H1 (cell line): ENCODE measurements at regions of chr20 and their contacts with region 1.

Region 1: GRCh38 chr20:57573890-57574289 is 13.0 kb downstream of the PCK1 start:
- DNase-seq: peak in 1 of 2 experiments; percentile 73
- H3K4me3 ChIP-seq: no peak overlapping the region
- H3K27ac ChIP-seq: no peak overlapping the region
- H3K4me1 ChIP-seq: peaks cover 0 to 10% (median 3%) of the 10 kb centered on the region in 4 experiments; a peak in 4 of 7 replicates
- H3K27me3 ChIP-seq: peaks cover 0 to 4% (median 0%) of the 10 kb centered on the region in 4 experiments; a peak in 4 of 7 replicates
- CTCF ChIP-seq: peak; percentile 73 to 89 (median 83)
- EP300 ChIP-seq: no peak
- POLR2A ChIP-seq: no peak
- RAD21 ChIP-seq: peak; percentile 41 to 61

Region 2: GRCh38 chr20:57514273-57514751 is 59.6 kb before region 1 on chr20:
- CTCF ChIA-PET with region 1: interaction called, 33 read pairs
- POLR2A ChIA-PET with region 1: no interaction called
- DNase-seq: peak in 1 of 2 experiments; percentile 71
- H3K4me3 ChIP-seq: no peak overlapping the region
- H3K27ac ChIP-seq: no peak overlapping the region
- H3K4me1 ChIP-seq: peaks cover 2 to 11% (median 3%) of the 10 kb centered on the region in 4 experiments; a peak in 5 of 7 replicates
- H3K27me3 ChIP-seq: no peaks in the 10 kb centered on the region
- CTCF ChIP-seq: peak; percentile 54 to 95 (median 80)
- EP300 ChIP-seq: no peak
- POLR2A ChIP-seq: no peak
- RAD21 ChIP-seq: peak; percentile 96 to 99

Region 3: DNA sequence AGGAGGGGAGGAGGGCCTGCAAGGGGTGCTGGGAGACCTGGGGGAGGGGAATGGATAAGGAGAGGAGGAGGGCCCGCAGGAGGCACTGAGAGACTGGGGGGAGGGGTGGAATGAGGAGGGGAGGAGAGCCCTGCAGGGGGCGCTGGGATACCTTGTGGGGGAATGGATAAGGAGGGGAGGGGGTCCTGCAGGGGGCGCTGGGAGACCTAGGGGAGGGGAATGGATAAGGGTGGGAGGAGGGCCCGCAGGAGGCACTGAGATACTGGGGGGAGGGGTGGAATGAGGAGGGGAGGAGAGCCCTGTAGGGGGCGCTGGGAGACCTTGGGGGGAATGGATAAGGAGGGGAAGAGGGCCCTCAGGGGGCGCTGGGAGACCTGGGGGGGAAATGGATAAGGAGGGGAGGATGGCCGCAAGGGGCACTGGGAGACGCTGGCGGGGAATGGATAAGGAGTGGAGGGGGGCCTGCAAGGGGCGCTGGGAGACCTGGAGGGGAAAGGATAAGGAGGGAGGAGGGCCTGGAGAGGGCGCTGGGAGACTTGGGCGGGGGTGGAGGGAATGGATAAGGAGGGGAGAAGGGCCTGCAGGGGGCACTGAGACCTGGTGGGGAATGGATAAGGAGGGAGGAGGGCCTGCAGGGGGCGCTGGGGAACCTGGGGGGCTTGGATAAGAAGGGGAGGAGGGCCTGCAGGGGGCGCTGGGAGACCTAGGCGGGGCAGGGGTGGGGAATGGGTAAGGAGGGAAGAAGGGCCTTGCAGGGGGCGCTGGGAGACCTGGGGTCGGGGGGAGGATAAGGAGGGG is 47.6 kb before region 1 on chr20:
- CTCF ChIA-PET with region 1: interaction called, 11 read pairs
- POLR2A ChIA-PET with region 1: interaction called, 4 read pairs
- DNase-seq: peak in 1 of 2 experiments; percentile 74
- H3K4me3 ChIP-seq: no peak overlapping the region
- H3K27ac ChIP-seq: no peak overlapping the region
- H3K4me1 ChIP-seq: peaks cover 0 to 19% (median 5%) of the 10 kb centered on the region in 4 experiments; a peak in 5 of 7 replicates
- H3K27me3 ChIP-seq: no peaks in the 10 kb centered on the region; a peak in 2 of 7 replicates
- CTCF ChIP-seq: peak; percentile 32 to 97 (median 59)
- EP300 ChIP-seq: no peak
- POLR2A ChIP-seq: no peak
- RAD21 ChIP-seq: peak; percentile 13 to 20; a peak in 3 of 4 replicates

Region 4: DNA sequence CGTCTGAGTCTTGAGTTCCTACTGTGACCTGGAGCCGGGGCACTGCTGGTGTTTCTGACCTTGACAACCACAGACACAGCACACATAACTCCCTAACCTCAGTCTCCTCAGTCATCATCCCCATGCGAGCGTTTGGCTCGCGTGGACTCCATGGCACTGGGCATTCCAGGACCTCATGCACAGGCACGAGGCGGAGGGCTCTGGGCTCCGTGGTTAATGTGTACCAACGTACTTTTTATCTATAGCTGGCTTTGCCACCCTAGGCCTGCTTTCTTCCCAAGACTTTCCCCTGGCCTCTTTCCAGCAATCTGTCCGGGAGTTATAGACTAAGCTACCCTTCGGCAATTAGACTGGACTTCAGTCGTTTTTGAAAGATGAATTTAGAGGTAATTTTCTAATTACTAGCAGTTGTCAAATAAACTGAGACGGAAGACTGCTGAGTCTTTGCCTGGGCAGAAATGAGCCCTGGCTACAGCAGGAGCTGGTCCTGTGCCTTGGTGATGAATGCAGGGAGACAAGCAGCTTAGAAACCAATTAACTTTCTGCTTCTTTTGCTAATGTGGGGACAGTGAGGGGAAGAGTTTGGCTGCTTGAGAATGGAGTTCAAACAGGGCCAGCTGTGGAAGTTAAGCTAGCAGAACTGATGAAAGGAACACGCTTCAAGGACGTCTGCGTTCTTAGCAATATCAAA is 32.9 kb before region 1 on chr20:
- CTCF ChIA-PET with region 1: interaction called, 17 read pairs
- POLR2A ChIA-PET with region 1: interaction called, 3 read pairs
- DNase-seq: no peak
- H3K4me3 ChIP-seq: no peak overlapping the region
- H3K27ac ChIP-seq: no peak overlapping the region
- H3K4me1 ChIP-seq: no peaks in the 10 kb centered on the region
- H3K27me3 ChIP-seq: no peaks in the 10 kb centered on the region
- CTCF ChIP-seq: no peak
- EP300 ChIP-seq: no peak
- POLR2A ChIP-seq: no peak
- RAD21 ChIP-seq: no peak

Region 5: DNA sequence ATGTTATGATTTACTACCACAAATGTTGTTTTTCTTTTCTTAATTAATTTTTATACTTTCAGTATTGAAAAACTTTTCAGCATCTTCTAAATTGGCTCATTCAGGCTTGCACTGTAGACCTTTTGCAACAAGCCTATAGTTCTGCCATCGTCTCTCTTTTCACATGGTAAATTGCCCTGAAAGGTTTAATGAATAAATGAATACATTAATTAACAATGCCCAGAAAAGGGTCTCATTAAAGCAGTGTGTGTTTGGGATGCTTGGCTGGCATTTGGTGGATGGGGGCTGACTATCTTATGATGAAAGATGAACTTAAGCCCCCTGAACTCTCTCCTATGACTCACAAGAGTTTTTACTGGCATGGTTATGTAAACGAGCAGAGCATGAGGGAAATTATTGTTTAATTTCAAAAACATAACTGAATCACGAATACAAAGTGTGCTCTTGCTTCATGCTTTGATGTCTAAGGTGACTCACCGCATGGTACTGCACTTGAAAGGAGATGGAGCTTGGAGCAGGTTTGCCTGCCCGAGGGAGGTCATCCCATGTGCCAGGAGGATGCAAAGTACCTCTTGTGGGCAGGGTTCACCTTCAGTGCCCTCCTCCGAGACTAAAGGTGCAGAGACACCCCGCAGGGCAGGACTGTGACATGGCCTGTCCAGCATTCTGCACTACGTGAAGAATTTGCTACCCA is 26.8 kb before region 1 on chr20:
- CTCF ChIA-PET with region 1: interaction called, 11 read pairs
- POLR2A ChIA-PET with region 1: interaction called, 3 read pairs
- DNase-seq: no peak
- H3K4me3 ChIP-seq: no peak overlapping the region
- H3K27ac ChIP-seq: no peak overlapping the region
- H3K4me1 ChIP-seq: no peaks in the 10 kb centered on the region
- H3K27me3 ChIP-seq: no peaks in the 10 kb centered on the region
- CTCF ChIP-seq: no peak
- EP300 ChIP-seq: no peak
- POLR2A ChIP-seq: no peak
- RAD21 ChIP-seq: no peak

Region 6: DNA sequence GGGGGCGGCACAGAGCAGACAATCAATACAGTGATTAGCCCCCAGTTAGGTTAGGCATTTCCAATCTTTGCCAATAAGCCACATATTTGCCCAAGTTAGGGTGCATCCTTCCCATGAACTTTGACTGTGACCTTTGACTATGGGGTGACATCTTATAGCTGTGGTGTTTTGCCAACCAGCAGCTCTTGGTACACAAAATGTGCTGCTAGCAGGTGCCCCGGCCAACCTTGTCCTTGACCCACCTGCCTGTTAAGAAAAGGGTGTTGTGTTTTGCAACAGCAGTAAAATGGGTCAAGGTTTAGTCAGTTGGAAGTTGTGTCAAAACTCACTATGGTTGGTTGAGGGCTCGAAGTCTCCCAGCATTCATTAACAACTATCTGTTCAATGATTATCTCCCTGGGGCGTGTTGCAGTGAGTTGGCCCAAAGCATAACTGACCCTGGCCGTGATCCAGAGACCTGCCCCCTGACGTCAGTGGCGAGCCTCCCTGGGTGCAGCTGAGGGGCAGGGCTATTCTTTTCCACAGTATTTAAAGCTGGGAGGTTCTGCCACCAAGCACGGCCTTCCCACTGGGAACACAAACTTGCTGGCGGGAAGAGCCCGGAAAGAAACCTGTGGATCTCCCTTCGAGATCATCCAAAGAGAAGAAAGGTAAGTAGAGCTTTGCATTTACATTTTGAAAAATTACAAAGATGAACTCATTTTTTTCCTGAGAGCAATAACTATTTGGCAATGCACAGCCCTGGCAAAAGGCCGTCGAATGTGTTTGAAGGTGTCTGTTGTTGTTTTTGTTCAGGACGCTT is 13.1 kb before region 1 on chr20 and contains the start of gene PCK1:
- CTCF ChIA-PET with region 1: interaction called, 46 read pairs
- POLR2A ChIA-PET with region 1: interaction called, 3 read pairs
- DNase-seq: no peak
- H3K4me3 ChIP-seq: no peak within 1 kb of the TSS
- H3K27ac ChIP-seq: no peak within 1 kb of the TSS
- H3K4me1 ChIP-seq: no peaks in the 10 kb centered on the region
- H3K27me3 ChIP-seq: no peaks in the 10 kb centered on the region
- CTCF ChIP-seq: no peak
- EP300 ChIP-seq: no peak
- POLR2A ChIP-seq: no peak
- RAD21 ChIP-seq: no peak
- total RNA-seq, gene PCK1: not detected in 2 replicates